Heart left ventricle (tissue), 16 donors: ENCODE measurements at regions of chr1 and their contacts with region 1.

Region 1: GRCh38 chr1:161324020-161324419 is 9.8 kb downstream of the SDHC start:
- DNase-seq: no peak
- ATAC-seq: no peak
- H3K4me3 ChIP-seq: no peak overlapping the region
- H3K27ac ChIP-seq: no peak overlapping the region
- H3K4me1 ChIP-seq: no peaks in the 10 kb centered on the region
- H3K27me3 ChIP-seq: no peaks in the 10 kb centered on the region
- CTCF ChIP-seq: no peak
- POLR2A ChIP-seq: no peak

Region 2: DNA sequence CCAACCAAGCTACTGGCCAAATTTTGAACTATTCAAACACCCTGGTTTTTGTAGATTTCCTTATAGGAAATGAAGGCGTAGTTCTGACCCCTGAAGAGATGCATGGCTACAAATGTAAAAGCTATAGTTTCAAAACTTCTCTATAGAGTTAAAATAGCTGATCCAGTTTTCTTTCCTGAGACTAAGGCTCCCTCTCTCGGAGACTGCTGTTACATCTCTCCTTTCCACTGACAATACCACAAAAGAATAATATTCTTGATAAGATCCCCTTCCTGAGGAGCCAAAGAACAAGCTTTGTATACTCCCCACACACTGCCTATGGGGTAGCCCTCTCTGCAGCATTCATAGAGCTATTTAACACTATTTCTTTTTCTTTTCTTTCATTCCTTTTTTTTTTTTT is 50.4 kb after region 1 on chr1:
- intact Hi-C with region 1: loop called in 2 of 10 experiments (anchors 10 kb)
- DNase-seq: no peak
- ATAC-seq: no peak
- H3K4me3 ChIP-seq: no peak overlapping the region
- H3K27ac ChIP-seq: no peak overlapping the region
- H3K4me1 ChIP-seq: peaks cover 0 to 4% (median 0%) of the 10 kb centered on the region in 12 donors
- H3K27me3 ChIP-seq: no peaks in the 10 kb centered on the region
- CTCF ChIP-seq: no peak
- POLR2A ChIP-seq: no peak

Region 3: GRCh38 chr1:161408429-161409052 is 84.5 kb after region 1 on chr1:
- intact Hi-C with region 1: no loop called
- DNase-seq: no peak
- ATAC-seq: no peak
- H3K4me3 ChIP-seq: no peak overlapping the region
- H3K27ac ChIP-seq: no peak overlapping the region
- H3K4me1 ChIP-seq: peaks cover 0 to 8% (median 1%) of the 10 kb centered on the region in 12 donors
- H3K27me3 ChIP-seq: no peaks in the 10 kb centered on the region
- CTCF ChIP-seq: no peak
- POLR2A ChIP-seq: no peak